ENCODE measurements at regions of chr13 and their contacts with region 1.

Region 1: DNA sequence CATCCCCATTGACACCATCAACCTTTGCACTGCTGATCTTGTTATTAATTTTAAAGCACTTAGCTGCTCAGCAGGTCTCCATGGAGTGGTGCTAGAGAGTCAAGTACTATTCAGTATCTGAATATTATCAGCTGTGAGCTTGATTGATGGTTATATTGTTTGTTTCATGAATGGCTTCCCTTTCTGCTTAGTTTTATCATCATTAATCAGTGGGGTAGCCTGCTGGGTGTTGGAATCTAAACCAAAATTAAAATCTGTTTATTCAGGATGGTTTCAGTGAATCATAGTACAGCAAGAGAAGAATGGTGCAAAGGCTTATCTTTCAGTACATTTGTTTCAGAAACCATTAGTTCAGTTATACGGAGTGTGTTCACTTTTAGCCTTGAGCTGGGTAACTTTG is 42.5 kb upstream of the SCEL start:
- DNase-seq: peak in 2 of 10 donors; percentile 6 to 28
- H3K4me3 ChIP-seq: peak overlapping the region in 3 of 59 donors; percentile 4 to 25 (median 9)
- H3K27ac ChIP-seq: no peak overlapping the region
- H3K27me3 ChIP-seq: no peaks in the 10 kb centered on the region
- CTCF ChIP-seq: peak; percentile 28 to 78 (median 58)

Region 2: DNA sequence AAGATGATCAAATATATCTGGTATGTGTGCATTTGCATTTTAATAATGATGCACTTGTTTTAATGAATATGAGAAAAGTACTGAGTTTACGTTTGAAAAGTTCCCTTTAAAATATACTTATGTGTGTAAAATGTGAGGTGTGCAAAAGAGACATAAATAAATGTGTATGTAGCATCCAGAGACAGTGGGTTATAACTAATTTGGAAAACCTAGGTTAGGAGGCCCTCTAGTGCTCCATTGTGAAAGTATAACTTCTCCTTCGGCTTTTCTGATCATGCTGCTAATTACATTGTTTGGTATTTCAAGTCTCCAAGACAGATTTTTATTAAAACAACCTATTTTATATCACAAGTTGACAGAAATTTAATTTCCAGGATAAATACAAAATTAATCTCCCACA is 72.7 kb after region 1 on chr13:
- intact Hi-C with region 1: loop called (anchors 5 to 10 kb)
- DNase-seq: no peak
- H3K4me3 ChIP-seq: no peak overlapping the region
- H3K27ac ChIP-seq: no peak overlapping the region
- H3K27me3 ChIP-seq: no peaks in the 10 kb centered on the region
- CTCF ChIP-seq: peak in 55 of 56 donors; percentile 36 to 84 (median 61)

Region 3: DNA sequence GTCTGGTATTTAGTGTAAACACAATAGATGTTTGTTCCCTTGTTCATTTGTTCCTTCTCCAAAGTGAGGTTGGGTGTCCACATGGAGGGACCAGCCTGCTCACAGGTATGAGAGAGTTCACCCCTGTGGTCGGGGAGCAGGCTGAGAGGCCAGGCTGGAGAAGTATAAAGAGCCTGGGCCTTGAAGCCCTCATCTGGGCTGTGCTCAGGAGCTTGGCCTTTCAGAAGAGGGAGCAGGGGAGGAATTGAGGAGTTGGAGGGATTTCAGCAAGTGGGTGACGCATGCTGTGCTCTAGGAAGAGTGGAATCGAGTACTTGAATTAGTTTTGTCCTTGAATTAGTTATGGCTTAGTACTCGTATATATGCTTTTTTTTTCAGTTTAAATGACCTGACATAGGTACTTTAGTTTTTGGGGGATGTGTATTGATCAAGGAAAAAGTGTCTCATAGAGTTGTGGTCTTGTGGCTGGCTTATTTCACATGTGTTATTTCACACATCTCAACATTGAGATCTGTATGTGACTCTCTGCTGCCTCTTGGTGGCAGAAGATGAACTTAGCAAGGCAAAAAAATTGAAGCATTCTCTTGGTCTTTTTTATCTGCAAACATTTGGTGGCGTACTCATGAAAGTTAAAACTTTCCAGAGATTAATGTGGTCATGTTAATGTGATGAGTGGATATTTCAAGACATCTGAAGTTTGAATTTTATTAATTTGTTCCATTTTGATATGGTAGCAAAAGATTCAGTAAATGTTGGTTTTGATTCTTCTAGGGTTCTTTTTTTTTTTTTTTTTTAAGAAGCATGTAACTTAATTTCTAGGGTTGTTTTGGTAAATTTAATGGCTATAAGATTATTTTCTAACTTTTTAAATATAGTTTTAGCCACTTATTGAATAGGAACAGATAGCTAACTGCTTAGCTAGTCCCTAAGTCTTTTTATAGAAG is 258.8 kb after region 1 on chr13:
- intact Hi-C with region 1: loop called (anchors 10 kb)
- DNase-seq: peak in 1 of 10 donors; percentile 36
- H3K4me3 ChIP-seq: peak overlapping the region in 33 of 59 donors; percentile 1 to 69 (median 26)
- H3K27ac ChIP-seq: peak overlapping the region in 57 of 59 donors; percentile 23 to 98 (median 89)
- H3K27me3 ChIP-seq: no peaks in the 10 kb centered on the region
- CTCF ChIP-seq: peak; percentile 77 to 96 (median 87)

Region 4: GRCh38 chr13:78121459-78122348 is 628.7 kb after region 1 on chr13:
- intact Hi-C with region 1: loop called in 1 of 2 experiments (anchors 10 kb)
- DNase-seq: peak in 8 of 10 donors; percentile 11 to 61 (median 43)
- H3K4me3 ChIP-seq: peak overlapping the region in 38 of 59 donors; percentile 1 to 56 (median 25)
- H3K27ac ChIP-seq: no peak overlapping the region
- H3K27me3 ChIP-seq: no peaks in the 10 kb centered on the region
- CTCF ChIP-seq: peak; percentile 88 to 99 (median 96)

Measured in dorsolateral prefrontal cortex (tissue), 120 donors.